ENCODE measurements at regions of chr2 and their contacts with region 1.

Region 1: DNA sequence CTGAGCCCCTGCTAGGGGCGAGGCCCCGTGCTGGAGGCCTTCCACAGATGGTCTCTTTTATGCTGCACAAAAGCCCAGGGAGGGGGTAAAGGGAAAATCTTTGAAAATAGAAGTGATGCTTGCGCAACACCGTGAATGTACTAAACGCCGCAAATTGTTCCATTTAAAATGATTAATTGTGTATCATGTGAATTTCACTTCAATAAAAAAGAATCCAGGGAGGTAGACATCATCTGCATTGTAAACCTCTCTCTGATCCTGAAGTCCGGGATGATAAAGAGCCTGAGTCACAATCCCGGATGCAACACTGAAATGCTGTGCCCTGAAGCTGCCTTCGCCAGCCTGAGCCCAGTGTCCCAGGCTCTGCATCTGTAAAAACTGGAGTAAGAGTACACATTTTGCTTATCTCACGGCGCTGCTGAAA is 107.7 kb upstream of the PPP1CB start:
- DNase-seq: peak; percentile 55
- H3K4me3 ChIP-seq: no peak overlapping the region
- H3K27ac ChIP-seq: peak overlapping the region; percentile 48 to 53
- H3K4me1 ChIP-seq: no peaks in the 10 kb centered on the region
- H3K27me3 ChIP-seq: no peaks in the 10 kb centered on the region
- CTCF ChIP-seq: no peak
- POLR2A ChIP-seq: no peak

Region 2: DNA sequence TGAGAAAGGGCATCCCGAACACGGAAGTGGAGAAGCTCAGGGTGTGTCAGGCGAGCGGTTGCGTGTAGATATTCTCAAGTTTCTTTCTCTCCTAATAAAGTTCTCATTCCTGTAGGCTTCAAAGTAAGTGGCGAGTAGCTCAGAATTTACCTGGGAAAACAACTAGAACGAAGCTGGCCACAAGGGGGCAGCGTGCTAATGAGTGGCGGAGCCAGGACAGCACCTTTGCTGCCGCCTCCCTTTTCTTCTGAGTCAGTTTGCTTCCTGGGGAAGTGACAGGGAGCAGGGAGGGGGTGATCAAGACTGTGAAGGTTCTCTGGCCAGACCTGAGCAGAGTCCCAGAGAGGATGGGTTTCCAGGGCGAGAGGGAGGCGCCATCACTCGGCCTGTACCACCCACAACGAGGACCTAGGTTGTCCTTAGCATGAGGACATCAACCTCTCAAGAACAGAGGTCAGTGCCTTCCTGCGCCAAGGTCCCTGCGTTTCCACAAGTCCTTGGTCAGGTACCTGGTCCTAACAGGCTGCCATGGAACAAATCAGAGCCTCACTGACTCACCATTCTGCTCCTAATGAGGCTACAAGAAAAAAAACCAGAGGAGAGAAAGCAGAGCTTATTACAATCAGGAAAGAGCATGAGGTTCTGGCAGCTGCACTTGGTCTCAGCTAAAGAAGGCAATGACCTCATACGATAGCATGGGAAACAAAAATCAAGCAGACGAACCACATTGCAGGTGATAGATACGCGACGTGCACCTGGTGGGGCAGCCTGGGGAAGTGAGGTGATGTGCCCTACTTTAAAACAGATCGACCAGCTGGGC is 49.4 kb before region 1 on chr2:
- intact Hi-C with region 1: loop called (anchors 5 kb)
- DNase-seq: peak; percentile 95
- H3K4me3 ChIP-seq: no peak overlapping the region
- H3K27ac ChIP-seq: peak overlapping the region; percentile 80 to 89
- H3K4me1 ChIP-seq: peaks cover 2% of the 10 kb centered on the region
- H3K27me3 ChIP-seq: no peaks in the 10 kb centered on the region
- CTCF ChIP-seq: peak; percentile 92 to 96 (median 94)
- POLR2A ChIP-seq: no peak

Region 3: GRCh38 chr2:28606986-28607441 is 36.9 kb before region 1 on chr2:
- intact Hi-C with region 1: loop called (anchors 5 kb)
- DNase-seq: no peak
- H3K4me3 ChIP-seq: no peak overlapping the region
- H3K27ac ChIP-seq: peak overlapping the region; percentile 72 to 76
- H3K4me1 ChIP-seq: peaks cover 21% of the 10 kb centered on the region
- H3K27me3 ChIP-seq: no peaks in the 10 kb centered on the region
- CTCF ChIP-seq: no peak
- POLR2A ChIP-seq: no peak

Region 4: DNA sequence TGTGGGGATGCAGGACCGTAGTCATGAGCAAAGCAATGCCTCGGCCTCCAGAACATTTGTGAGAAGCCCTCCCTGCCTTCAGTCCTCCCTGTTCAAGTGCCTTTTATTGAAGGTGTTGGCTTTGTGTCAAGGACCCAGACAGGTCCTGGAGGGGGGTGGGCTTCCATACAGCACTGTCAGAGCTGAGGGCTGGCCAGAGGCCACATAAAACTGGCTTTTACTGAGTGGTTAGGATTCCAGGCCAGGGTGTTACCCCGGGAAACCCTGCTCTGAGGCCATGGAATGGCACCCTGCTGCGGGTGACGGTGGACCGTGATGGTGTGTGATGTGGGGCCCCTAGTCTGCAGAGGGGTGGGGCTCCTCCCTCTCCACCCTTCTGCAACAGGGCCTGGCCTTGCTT is 378.8 kb after region 1 on chr2:
- intact Hi-C with region 1: no loop called
- DNase-seq: no peak
- H3K4me3 ChIP-seq: no peak overlapping the region
- H3K27ac ChIP-seq: no peak overlapping the region
- H3K4me1 ChIP-seq: no peaks in the 10 kb centered on the region
- H3K27me3 ChIP-seq: no peaks in the 10 kb centered on the region
- CTCF ChIP-seq: no peak
- POLR2A ChIP-seq: no peak

Measured in prostate gland (tissue), 2 donors.